Sciatic nerve (tissue), 2 donors: ENCODE measurements at regions of chr19 and their contacts with region 1.

Region 1: DNA sequence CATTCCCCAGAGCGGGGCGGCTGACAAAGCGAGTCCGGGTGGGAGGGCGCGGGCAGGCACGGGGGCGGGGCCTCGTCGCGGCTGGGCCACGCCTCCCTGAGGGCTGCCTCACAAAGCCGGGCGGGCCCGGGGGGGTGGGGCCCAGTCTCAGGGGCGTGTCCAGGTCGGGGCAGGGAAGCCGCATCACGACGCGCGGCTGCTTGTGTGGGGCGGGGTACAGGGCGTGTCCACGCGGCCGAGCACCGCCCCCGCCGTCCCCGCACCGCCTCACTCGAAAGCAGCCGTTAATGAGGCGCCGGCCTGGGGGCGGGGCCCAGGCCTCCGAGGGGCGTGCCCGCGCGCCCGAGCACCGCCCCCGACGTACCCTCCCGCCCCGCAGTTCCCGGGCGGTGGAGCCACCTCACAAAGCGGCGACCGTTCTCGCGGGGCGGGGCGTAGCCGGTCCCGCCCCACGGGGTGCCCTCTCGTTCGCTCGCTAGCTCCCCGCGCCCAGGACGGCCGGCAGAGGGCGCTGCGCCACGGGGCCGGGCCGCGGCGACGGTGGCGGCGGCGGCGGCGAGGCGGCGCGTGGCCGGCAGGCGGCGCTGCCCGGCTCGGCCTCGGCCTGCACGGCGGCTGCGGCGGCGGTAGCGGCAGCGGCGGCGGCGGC is at the start of gene CARM1:
- DNase-seq: peak; percentile 99
- ATAC-seq: peak; percentile 96
- total RNA-seq, gene CARM1: 33.3 TPM

Region 2: DNA sequence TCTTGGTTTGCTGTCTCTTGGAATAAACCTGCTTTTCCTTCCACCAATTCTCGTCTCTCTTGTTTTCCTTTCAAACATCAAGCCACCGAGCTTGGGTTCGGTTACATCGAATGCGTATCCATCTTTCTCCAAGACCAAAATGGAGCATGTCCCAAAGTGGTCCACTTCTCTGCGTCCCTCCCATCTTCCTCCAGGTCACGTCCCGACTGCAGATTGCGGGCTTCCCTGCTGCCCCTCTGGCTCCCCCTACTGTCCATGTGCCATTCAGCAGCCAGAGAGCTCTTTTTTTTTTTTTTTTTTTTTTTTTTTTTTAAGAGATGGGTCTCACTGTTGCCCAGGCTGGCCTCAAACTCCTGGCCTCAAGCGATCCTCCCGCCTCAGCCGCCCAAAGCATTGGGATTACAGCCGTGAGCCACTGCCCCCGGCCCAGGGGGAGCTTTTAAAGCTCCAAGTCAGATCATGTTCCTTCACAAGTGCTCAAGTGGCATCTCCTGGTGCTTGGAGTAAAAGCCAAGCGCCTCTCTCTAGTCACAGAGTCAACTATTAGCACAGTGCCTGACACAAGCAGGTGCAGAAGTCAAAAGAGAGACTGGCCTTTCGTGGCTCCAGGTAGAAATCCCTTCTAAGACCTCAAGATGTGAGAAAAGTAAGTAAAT is 870.8 kb before region 1 on chr19:
- intact Hi-C with region 1: no loop called
- DNase-seq: peak; percentile 87
- ATAC-seq: peak; percentile 68

Region 3: DNA sequence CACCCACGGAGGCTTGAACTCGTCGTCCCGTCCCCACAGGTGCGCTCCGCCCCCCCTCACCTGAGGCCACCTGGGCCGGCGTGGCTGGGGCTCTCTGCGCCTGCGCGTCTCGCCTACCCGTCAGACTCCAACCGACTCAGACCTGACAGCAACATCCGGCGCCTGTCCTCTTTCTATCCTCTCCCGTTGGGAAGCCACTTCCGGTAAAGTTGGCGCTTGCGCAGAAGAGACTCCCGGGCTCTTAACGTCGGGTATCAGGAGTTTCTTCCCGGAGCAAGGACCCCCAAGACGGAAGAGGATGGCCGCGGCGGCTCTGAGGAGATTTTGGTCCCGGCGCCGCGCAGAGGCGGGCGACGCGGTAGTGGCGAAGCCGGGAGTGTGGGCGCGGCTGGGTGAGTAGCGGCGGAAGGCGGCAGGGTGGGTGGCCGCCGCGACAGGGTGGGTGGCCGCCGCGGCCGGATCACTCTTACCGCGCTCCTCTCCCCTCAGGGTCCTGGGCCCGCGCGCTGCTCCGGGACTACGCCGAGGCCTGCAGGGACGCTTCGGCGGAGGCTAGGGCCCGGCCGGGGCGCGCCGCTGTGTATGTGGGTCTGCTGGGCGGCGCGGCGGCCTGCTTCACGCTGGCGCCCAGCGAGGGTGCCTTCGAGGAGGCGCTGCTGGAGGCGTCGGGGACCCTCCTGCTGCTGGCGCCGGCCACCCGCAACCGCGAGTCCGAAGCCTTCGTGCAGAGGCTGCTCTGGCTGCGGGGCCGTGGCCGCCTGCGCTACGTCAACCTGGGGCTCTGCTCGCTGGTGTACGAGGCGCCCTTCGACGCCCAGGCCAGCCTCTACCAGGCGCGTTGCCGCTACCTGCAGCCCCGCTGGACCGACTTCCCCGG is 57.7 kb after region 1 on chr19 and contains the starts of genes TIMM29 and YIPF2:
- intact Hi-C with region 1: loop called (anchors 10 kb)
- DNase-seq: peak; percentile 98
- ATAC-seq: peak; percentile 98
- total RNA-seq, gene TIMM29: 14.4 TPM
- total RNA-seq, gene YIPF2: 33.1 TPM

Region 4: GRCh38 chr19:11050323-11051114 is 179.4 kb after region 1 on chr19:
- intact Hi-C with region 1: no loop called
- DNase-seq: no peak
- ATAC-seq: no peak

Region 5: GRCh38 chr19:11064831-11065303 is 193.8 kb after region 1 on chr19:
- intact Hi-C with region 1: no loop called
- DNase-seq: no peak
- ATAC-seq: peak; percentile 31